CD8-positive, alpha-beta T cell (primary cell): ENCODE measurements at regions of chr15 and their contacts with region 1.

Region 1: GRCh38 chr15:25838191-25838870 is 24.8 kb downstream of the ATP10A start:
- DNase-seq: no peak
- ATAC-seq: no peak
- H3K4me3 ChIP-seq: no peak overlapping the region
- H3K4me3 Mint-ChIP-seq: no peak overlapping the region
- H3K27ac ChIP-seq: no peak overlapping the region
- H3K27ac Mint-ChIP-seq: no peak overlapping the region
- H3K4me1 ChIP-seq: peaks cover 12% of the 10 kb centered on the region
- H3K4me1 Mint-ChIP-seq: peaks cover 53% of the 10 kb centered on the region
- H3K27me3 ChIP-seq: no peaks in the 10 kb centered on the region
- H3K27me3 Mint-ChIP-seq: no peaks in the 10 kb centered on the region
- CTCF ChIP-seq: no peak

Region 2: DNA sequence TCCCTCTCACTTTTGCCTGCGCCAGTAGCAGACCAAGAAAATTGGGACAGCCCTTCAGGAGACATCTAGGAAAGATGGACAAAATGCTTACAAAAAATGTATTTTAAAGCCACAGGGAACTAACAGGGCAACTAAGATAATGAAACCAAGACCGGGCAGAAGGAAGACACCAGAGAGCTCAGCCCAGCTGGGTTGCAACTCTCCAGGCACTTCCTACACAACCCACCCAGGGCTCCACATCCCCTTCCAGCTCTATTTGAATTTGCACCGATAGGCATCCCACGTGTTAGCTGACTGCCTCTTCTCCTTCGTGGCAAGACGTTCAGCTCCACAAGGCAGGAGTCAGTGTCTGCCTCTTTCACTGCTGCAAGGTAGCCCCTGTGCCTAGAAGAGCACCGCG is 31.4 kb after region 1 on chr15:
- CTCF ChIA-PET with region 1: interaction called, 3 read pairs
- POLR2A ChIA-PET with region 1: no interaction called
- intact Hi-C with region 1: loop called in 1 of 2 experiments (anchors 5 kb)
- DNase-seq: no peak
- ATAC-seq: no peak
- H3K4me3 ChIP-seq: no peak overlapping the region
- H3K4me3 Mint-ChIP-seq: no peak overlapping the region
- H3K27ac ChIP-seq: no peak overlapping the region
- H3K27ac Mint-ChIP-seq: no peak overlapping the region
- H3K4me1 ChIP-seq: no peaks in the 10 kb centered on the region
- H3K4me1 Mint-ChIP-seq: peaks cover 7% of the 10 kb centered on the region
- H3K27me3 ChIP-seq: no peaks in the 10 kb centered on the region
- H3K27me3 Mint-ChIP-seq: no peaks in the 10 kb centered on the region
- CTCF ChIP-seq: no peak

Region 3: DNA sequence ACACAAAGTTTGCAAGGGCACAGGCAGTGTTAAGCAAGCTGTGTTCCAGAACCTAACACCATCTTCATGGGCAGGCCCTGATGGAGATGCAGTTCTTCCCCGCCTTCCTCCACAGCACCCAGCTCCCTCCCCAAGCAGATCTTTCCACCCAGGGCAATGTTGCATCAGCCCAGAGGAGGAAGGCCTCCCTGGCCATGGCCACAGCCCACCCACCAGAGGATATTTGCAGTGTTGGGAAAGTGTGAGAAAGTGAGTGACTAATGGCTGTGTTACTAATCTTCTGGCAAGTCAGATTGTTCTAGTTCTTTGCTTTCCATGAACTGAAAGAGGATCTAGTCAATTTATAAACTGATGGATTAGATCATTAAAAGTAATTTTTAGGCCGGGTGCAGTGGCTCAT is 66.8 kb after region 1 on chr15:
- CTCF ChIA-PET with region 1: no interaction called
- POLR2A ChIA-PET with region 1: no interaction called
- intact Hi-C with region 1: no loop called
- DNase-seq: no peak
- ATAC-seq: no peak
- H3K4me3 ChIP-seq: no peak overlapping the region
- H3K4me3 Mint-ChIP-seq: no peak overlapping the region
- H3K27ac ChIP-seq: no peak overlapping the region
- H3K27ac Mint-ChIP-seq: no peak overlapping the region
- H3K4me1 ChIP-seq: peaks cover 19% of the 10 kb centered on the region
- H3K4me1 Mint-ChIP-seq: peaks cover 15% of the 10 kb centered on the region
- H3K27me3 ChIP-seq: peaks cover 0 to 2% of the 10 kb centered on the region in 2 experiments
- H3K27me3 Mint-ChIP-seq: no peaks in the 10 kb centered on the region
- CTCF ChIP-seq: no peak